PC-3 (cell line): ENCODE measurements at regions of chr14 and their contacts with region 1.

Region 1: DNA sequence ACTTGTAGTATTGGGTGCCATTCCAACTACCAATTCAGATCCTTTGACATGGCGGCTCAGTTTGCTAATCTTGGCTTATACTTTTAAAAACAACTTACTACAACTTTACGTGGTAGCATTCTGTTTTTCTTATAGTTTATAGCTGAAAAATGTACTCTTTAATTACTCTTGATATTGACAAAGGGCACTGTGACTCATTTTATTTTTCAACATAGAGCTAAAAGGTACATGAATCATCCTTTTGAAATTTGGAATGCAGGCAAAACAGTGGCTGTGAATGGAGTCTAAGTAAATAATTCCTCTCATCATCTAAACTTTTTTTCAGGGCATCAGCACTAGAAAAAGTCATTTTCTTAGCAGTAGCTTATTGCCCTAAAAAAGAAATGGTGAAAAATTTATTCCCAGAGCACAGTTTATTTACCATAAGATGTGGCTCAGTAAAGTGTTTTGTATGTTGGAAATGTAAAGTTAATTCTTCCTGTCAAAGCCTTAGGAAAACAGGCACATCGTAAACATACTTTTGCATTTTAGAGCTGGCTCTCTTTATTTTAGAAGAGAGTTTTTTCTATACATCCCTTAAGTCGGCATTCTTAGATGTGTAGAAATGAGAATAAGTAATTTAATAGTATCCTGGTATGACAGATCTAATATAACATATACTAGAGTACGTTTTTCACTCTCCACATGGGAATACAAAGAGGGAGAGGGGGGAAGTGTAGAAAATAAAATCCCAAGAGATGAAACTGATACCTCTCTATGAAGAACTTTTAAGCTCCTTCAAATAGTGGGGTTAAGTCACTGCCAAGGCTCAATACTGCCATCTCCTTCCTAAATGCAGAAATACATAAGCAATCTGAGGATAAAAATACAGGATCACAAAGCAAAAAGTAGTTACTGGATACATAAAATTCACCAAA is 55.2 kb downstream of the SLC25A21 start:
- DNase-seq: peak; percentile 95
- ATAC-seq: peak; percentile 61
- H3K4me3 ChIP-seq: peak overlapping the region; percentile 37
- H3K27ac ChIP-seq: peak overlapping the region; percentile 88
- H3K4me1 ChIP-seq: peaks cover 57% of the 10 kb centered on the region
- H3K27me3 ChIP-seq: no peaks in the 10 kb centered on the region
- CTCF ChIP-seq: peak; percentile 84

Region 2: DNA sequence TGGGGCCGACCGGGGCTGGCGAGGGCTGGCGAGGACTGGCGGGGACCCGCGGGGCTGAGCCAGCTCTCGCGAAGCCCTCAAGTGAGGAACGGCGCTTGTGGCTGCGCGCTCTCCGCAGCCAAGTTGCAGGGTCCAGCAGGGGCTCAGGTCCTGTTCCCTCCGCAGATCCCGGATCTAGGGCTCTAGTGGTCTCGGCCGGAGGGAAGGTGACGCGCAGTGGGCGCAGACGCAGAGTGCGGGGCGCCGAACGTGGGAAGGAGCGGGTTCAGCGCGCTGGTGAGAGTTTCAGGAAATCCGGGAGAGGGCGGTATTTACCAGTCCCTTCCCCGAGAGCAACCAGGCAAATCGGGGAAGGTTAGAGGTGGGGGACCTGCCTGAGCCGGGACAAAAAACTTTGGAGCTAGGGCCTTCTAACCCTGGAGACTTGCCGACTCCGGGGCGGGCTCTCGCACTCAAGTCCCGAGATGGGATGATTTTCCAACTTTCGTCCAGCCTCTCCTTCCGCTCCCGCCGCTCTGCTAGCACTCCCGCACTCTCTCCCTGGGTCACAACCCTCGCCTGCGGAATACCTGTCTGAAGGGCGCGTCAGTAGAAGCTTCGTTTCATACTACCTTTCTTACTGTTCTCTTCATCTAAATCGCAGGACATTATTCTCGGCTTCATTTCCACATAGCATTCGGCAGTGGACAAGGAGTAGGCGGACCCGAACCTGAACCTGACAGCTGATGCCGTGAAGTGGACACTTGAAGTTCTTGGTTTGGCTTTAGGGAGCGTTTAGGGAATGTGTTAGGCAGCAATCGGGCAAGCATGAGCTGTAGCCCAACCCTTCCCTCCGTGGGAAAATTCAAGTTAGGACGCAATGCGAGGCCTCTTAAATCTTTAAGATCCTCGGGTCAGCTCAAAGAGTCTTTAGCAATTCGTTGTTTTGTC is 469.1 kb before region 1 on chr14:
- CTCF ChIA-PET with region 1: interaction called, 23 read pairs
- POLR2A ChIA-PET with region 1: no interaction called
- intact Hi-C with region 1: loop called (anchors 1 kb)
- DNase-seq: peak; percentile 73
- ATAC-seq: peak; percentile 93
- H3K4me3 ChIP-seq: peak overlapping the region; percentile 82
- H3K27ac ChIP-seq: no peak overlapping the region
- H3K4me1 ChIP-seq: peaks cover 15% of the 10 kb centered on the region
- H3K27me3 ChIP-seq: no peaks in the 10 kb centered on the region
- CTCF ChIP-seq: peak; percentile 86

Region 3: DNA sequence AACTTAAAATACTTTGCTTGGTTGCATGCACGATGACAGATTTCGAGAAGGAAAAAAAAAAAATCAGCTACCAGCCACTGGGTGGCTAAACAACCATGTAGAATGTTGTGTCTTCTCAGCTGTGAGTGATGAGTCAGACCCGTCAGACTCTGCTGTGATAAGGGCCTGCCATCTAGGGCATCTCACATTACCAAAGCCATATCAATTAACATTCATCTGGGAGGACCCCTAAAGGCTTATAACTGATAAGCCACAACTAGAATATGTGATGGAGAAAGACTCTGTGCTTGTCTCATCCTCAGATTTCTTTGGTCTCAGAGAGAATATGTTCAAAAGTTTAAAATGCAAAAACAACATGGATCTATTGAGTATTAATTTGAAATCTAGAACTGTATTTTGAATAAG is 344.1 kb before region 1 on chr14:
- CTCF ChIA-PET with region 1: interaction called, 4 read pairs
- POLR2A ChIA-PET with region 1: no interaction called
- intact Hi-C with region 1: loop called (anchors 1 kb)
- DNase-seq: peak; percentile 76
- ATAC-seq: peak; percentile 94
- H3K4me3 ChIP-seq: no peak overlapping the region
- H3K27ac ChIP-seq: no peak overlapping the region
- H3K4me1 ChIP-seq: peaks cover 15% of the 10 kb centered on the region
- H3K27me3 ChIP-seq: no peaks in the 10 kb centered on the region
- CTCF ChIP-seq: peak; percentile 71

Region 4: GRCh38 chr14:36973806-36974442 is 143.3 kb before region 1 on chr14:
- CTCF ChIA-PET with region 1: interaction called, 3 read pairs
- POLR2A ChIA-PET with region 1: no interaction called
- intact Hi-C with region 1: loop called (anchors 1 kb)
- DNase-seq: peak; percentile 85
- ATAC-seq: peak; percentile 84
- H3K4me3 ChIP-seq: peak overlapping the region; percentile 40
- H3K27ac ChIP-seq: peak overlapping the region; percentile 92
- H3K4me1 ChIP-seq: peaks cover 61% of the 10 kb centered on the region
- H3K27me3 ChIP-seq: no peaks in the 10 kb centered on the region
- CTCF ChIP-seq: no peak

Region 5: DNA sequence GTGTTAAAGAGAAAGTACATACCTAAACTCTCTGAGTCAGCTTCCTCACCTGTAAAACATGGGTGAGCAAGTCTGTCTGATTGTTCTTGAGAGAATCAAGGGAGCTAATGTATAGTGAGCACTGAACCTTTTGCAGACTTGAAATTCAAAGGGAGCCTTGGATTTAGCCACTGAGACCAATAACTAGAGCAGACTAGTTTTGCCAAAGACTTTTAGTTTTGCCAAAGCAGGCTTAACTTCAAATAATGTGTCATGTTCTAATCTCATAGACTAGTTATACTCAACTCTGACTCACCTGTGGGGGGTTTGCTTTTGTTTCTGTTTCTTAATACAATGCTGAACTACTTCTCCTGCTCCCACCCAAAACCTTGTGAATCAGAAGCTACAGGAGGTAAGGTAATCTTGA is 68.5 kb before region 1 on chr14:
- CTCF ChIA-PET with region 1: no interaction called
- POLR2A ChIA-PET with region 1: no interaction called
- intact Hi-C with region 1: loop called (anchors 1 kb)
- DNase-seq: peak; percentile 94
- ATAC-seq: peak; percentile 89
- H3K4me3 ChIP-seq: peak overlapping the region; percentile 29; the same call in 1 of the 2 replicates
- H3K27ac ChIP-seq: peak overlapping the region; percentile 77
- H3K4me1 ChIP-seq: peaks cover 34% of the 10 kb centered on the region
- H3K27me3 ChIP-seq: no peaks in the 10 kb centered on the region
- CTCF ChIP-seq: no peak